ENCODE measurements at regions of chr6 and their contacts with region 1.

Region 1: GRCh38 chr6:53979468-53980067 is 131.7 kb upstream of the MLIP start:
- DNase-seq: no peak
- H3K4me3 ChIP-seq: no peak overlapping the region
- H3K27ac ChIP-seq: no peak overlapping the region
- H3K4me1 ChIP-seq: peaks cover 8% of the 10 kb centered on the region
- H3K27me3 ChIP-seq: no peaks in the 10 kb centered on the region
- CTCF ChIP-seq: peak; percentile 90

Region 2: DNA sequence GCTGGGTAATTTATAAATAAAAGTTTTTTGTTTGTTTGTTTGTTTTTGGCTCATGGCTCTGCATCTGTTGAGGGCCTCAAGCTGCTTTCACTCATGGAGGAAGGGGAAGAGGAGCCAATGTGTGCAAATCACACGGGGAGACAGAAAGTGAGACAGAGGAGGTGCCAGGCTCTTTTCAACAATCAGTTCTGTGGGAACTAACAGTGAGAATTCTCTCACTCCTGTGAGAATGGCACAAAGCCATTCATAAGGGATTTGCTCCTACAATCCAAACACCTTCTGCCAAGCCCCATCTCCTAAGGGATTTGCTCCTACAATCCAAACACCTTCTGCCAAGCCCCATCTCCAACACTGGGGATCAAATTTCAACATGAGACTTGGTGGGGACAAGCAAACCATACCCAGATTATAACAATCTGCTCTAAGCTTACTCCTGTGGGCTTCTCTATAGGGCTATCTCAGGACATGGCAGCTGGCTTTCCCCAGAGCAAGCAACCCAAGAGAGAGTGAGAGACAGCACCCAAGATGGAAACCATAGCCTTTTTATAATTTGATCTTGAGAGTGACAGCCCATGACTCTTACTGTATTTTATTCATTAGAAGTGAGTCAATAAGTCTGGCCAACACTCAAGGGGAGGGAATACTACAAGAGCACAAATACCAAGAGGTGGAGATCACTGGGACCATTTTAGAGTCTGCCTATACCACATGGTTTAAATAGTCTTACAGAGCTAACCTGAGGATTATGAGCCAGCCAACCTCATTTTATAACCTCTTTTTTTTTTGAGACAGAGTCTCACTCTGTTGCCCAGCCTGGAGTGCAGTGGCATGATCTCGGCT is 207.6 kb before region 1 on chr6:
- intact Hi-C with region 1: no loop called
- DNase-seq: no peak
- H3K4me3 ChIP-seq: no peak overlapping the region
- H3K27ac ChIP-seq: no peak overlapping the region
- H3K4me1 ChIP-seq: peaks cover 11% of the 10 kb centered on the region
- H3K27me3 ChIP-seq: no peaks in the 10 kb centered on the region
- CTCF ChIP-seq: no peak

Region 3: GRCh38 chr6:54060286-54060685 is 80.7 kb after region 1 on chr6:
- intact Hi-C with region 1: no loop called
- DNase-seq: no peak
- H3K4me3 ChIP-seq: peak overlapping the region; percentile 31
- H3K27ac ChIP-seq: peak overlapping the region; percentile 82
- H3K4me1 ChIP-seq: peaks cover 76% of the 10 kb centered on the region
- H3K27me3 ChIP-seq: no peaks in the 10 kb centered on the region
- CTCF ChIP-seq: no peak

Region 4: DNA sequence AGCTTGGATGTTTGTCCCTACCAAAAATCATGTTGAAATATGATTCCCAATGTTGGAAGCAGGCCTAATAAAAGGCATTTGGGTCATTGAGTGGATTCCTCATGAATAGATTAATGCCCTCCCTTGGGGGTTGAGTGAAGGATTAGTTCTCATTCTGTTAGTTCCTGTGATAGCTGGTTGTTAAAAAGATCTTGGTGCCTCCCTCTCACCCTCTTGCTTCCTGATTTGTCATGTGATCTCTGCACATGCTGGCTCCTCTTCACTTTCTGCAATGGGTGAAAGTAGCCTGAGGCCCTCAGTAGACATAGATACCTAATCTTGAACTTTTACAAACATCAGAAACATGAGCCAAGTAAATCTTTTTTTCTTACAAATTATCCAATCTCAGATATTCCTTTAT is 1079.1 kb after region 1 on chr6:
- intact Hi-C with region 1: loop called (anchors 10 kb)
- DNase-seq: no peak
- H3K4me3 ChIP-seq: no peak overlapping the region
- H3K27ac ChIP-seq: no peak overlapping the region
- H3K4me1 ChIP-seq: no peaks in the 10 kb centered on the region
- H3K27me3 ChIP-seq: no peaks in the 10 kb centered on the region
- CTCF ChIP-seq: no peak

Region 5: DNA sequence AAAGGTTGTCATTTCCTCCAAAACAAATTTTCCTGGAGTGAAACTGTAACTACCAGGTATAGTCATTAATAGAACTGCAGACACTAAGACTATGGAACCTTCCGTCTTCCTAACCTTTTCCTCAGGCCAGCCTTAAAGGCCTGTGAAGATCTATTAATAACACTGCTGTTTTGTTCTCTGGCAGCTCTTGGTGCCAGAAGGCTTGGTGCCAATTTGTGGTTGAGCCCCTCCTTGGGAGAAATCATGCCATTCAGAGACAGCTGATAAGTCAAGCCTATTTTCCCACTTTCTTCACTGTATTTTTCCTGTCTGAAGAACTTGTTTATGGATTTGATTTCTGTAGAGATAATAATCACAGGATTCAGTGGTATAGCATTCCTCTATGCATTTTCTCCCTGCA is 1259.5 kb after region 1 on chr6:
- intact Hi-C with region 1: loop called (anchors 5 kb)
- DNase-seq: no peak
- H3K4me3 ChIP-seq: no peak overlapping the region
- H3K27ac ChIP-seq: no peak overlapping the region
- H3K4me1 ChIP-seq: peaks cover 9% of the 10 kb centered on the region
- H3K27me3 ChIP-seq: no peaks in the 10 kb centered on the region
- CTCF ChIP-seq: no peak